HepG2 (cell line): ENCODE measurements at regions of chr9 and their contacts with region 1.

Region 1: GRCh38 chr9:34190996-34191892 is 12.4 kb downstream of the UBAP1 start:
- DNase-seq: peak; percentile 73
- ATAC-seq: peak; percentile 86
- H3K4me3 ChIP-seq: peak overlapping the region; percentile 1 to 39 (median 24); a peak in 2 of 6 replicates
- H3K27ac ChIP-seq: peak overlapping the region; percentile 65
- H3K4me1 ChIP-seq: peaks cover 26% of the 10 kb centered on the region
- H3K27me3 ChIP-seq: no peaks in the 10 kb centered on the region
- CTCF ChIP-seq: peak; percentile 61
- EP300 ChIP-seq: peak in 1 of 2 experiments; percentile 41; a peak in 1 of 4 replicates
- POLR2A ChIP-seq: no peak
- RAD21 ChIP-seq: no peak

Region 2: GRCh38 chr9:34222451-34222850 is 31.2 kb after region 1 on chr9:
- CTCF ChIA-PET with region 1: no interaction called
- POLR2A ChIA-PET with region 1: interaction called, 5 read pairs
- in situ Hi-C with region 1: no loop called
- intact Hi-C with region 1: loop called (anchors 5 kb)
- DNase-seq: peak; percentile 34
- ATAC-seq: peak; percentile 69
- H3K4me3 ChIP-seq: no peak overlapping the region
- H3K27ac ChIP-seq: peak overlapping the region; percentile 48
- H3K4me1 ChIP-seq: peaks cover 35% of the 10 kb centered on the region
- H3K27me3 ChIP-seq: no peaks in the 10 kb centered on the region
- CTCF ChIP-seq: no peak
- EP300 ChIP-seq: no peak; a peak in 1 of 4 replicates
- POLR2A ChIP-seq: no peak
- RAD21 ChIP-seq: no peak